CD8-positive, alpha-beta T cell (primary cell): ENCODE measurements at regions of chr3 and their contacts with region 1.

Region 1: DNA sequence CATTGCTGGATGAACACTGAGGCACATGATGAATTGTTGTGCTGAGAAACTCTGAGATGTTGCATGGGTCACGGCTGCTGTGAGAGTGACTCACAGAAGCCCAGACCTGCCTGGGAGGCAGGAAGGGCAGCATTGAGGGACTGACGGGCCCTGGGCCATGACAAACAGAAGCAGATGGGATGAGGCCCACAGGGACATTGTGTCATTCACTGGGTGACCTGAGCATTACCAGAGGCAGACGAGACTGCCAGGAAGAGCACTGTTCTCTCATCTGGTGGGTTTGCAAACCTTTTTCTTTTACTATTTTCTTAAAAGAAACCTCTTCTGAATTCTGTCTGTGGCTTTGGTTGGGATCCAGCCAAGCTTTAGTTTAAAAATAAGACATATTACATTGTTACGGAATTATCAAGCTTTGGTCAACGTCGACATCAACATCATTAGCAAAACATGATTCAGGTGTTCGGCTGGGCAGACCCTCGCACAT is 67.8 kb downstream of the BDH1 start:
- DNase-seq: no peak
- ATAC-seq: no peak
- H3K4me3 ChIP-seq: no peak overlapping the region
- H3K4me3 Mint-ChIP-seq: no peak overlapping the region
- H3K27ac ChIP-seq: no peak overlapping the region
- H3K27ac Mint-ChIP-seq: no peak overlapping the region
- H3K4me1 ChIP-seq: no peaks in the 10 kb centered on the region
- H3K4me1 Mint-ChIP-seq: no peaks in the 10 kb centered on the region
- H3K27me3 ChIP-seq: no peaks in the 10 kb centered on the region
- H3K27me3 Mint-ChIP-seq: peaks cover 4% of the 10 kb centered on the region
- CTCF ChIP-seq: no peak

Region 2: GRCh38 chr3:195999896-196000295 is 1488.1 kb before region 1 on chr3:
- CTCF ChIA-PET with region 1: no interaction called
- POLR2A ChIA-PET with region 1: no interaction called
- intact Hi-C with region 1: loop called in 1 of 2 experiments (anchors 10 kb)
- DNase-seq: no peak
- ATAC-seq: no peak
- H3K4me3 ChIP-seq: no peak overlapping the region
- H3K4me3 Mint-ChIP-seq: no peak overlapping the region
- H3K27ac ChIP-seq: no peak overlapping the region
- H3K27ac Mint-ChIP-seq: no peak overlapping the region
- H3K4me1 ChIP-seq: no peaks in the 10 kb centered on the region
- H3K4me1 Mint-ChIP-seq: no peaks in the 10 kb centered on the region
- H3K27me3 ChIP-seq: no peaks in the 10 kb centered on the region
- H3K27me3 Mint-ChIP-seq: peaks cover 9% of the 10 kb centered on the region
- CTCF ChIP-seq: no peak

Region 3: DNA sequence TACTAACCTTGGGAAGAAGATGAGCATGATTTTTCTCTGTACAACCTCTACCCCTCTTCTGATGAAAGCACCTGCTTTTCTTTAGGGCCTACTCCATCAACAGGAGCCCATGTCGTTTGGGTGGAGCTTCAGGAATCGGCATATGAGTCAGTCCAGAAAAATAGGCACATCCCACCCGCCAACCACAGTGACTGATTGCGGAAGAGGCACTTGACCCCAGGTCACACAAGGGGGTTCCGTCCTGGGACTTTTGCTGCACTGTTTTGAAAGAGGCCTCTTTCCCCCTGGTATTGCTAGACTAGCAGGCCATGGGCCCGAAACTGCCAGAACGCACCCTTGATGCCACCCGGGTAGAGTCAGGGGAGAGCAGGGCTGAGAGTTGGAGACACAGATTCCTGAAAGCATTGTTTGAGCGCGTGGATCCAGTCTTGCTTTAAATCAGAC is 867.8 kb before region 1 on chr3:
- CTCF ChIA-PET with region 1: no interaction called
- POLR2A ChIA-PET with region 1: no interaction called
- intact Hi-C with region 1: no loop called
- DNase-seq: peak in 2 of 9 experiments; percentile 46 to 60
- ATAC-seq: peak; percentile 64
- H3K4me3 ChIP-seq: no peak overlapping the region
- H3K4me3 Mint-ChIP-seq: no peak overlapping the region
- H3K27ac ChIP-seq: no peak overlapping the region
- H3K27ac Mint-ChIP-seq: peak overlapping the region; percentile 1
- H3K4me1 ChIP-seq: peaks cover 7% of the 10 kb centered on the region
- H3K4me1 Mint-ChIP-seq: peaks cover 24% of the 10 kb centered on the region
- H3K27me3 ChIP-seq: no peaks in the 10 kb centered on the region
- H3K27me3 Mint-ChIP-seq: no peaks in the 10 kb centered on the region
- CTCF ChIP-seq: no peak

Region 4: GRCh38 chr3:197761784-197762183 is 273.8 kb after region 1 on chr3:
- CTCF ChIA-PET with region 1: no interaction called
- POLR2A ChIA-PET with region 1: no interaction called
- intact Hi-C with region 1: no loop called
- DNase-seq: no peak
- ATAC-seq: no peak
- H3K4me3 ChIP-seq: no peak overlapping the region
- H3K4me3 Mint-ChIP-seq: no peak overlapping the region
- H3K27ac ChIP-seq: no peak overlapping the region
- H3K27ac Mint-ChIP-seq: no peak overlapping the region
- H3K4me1 ChIP-seq: no peaks in the 10 kb centered on the region
- H3K4me1 Mint-ChIP-seq: peaks cover under 1% of the 10 kb centered on the region
- H3K27me3 ChIP-seq: no peaks in the 10 kb centered on the region
- H3K27me3 Mint-ChIP-seq: no peaks in the 10 kb centered on the region
- CTCF ChIP-seq: no peak